ENCODE measurements at regions of chr3 and their contacts with region 1.

Region 1: GRCh38 chr3:158644345-158644908 is at the start of gene GFM1:
- DNase-seq: peak; percentile 96
- H3K4me3 Mint-ChIP-seq: peak within 1 kb of the TSS; percentile 93
- H3K27ac Mint-ChIP-seq: peak within 1 kb of the TSS; percentile 92
- H3K4me1 Mint-ChIP-seq: peaks cover 24% of the 10 kb centered on the region
- H3K27me3 Mint-ChIP-seq: no peaks in the 10 kb centered on the region
- total RNA-seq, gene GFM1: 73.4 and 75.6 TPM in 2 replicates

Region 2: DNA sequence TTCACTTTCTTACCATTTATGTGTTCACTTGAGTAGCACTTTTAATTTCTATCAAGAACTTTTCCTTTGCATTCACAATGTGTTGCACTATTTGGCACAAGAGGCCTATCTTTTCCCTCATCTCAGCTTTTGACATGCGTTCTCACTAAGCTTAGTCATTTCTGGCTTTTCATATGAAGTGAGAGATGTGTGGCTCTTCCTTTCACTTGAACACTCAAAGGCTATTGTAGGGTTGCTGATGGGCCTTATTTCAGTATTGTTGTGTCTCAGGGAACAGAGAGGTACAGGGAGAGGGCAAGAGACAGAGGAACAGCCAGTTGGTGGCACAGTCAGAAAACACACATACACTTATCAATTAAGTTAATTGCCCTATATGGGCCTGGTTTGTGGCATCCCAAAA is 200.8 kb before region 1 on chr3:
- intact Hi-C with region 1: loop called (anchors 5 kb)
- DNase-seq: peak; percentile 56
- H3K4me3 Mint-ChIP-seq: no peak overlapping the region
- H3K27ac Mint-ChIP-seq: peak overlapping the region; percentile 71
- H3K4me1 Mint-ChIP-seq: peaks cover 10% of the 10 kb centered on the region
- H3K27me3 Mint-ChIP-seq: no peaks in the 10 kb centered on the region

Region 3: GRCh38 chr3:158539414-158540014 is 104.9 kb before region 1 on chr3:
- intact Hi-C with region 1: loop called (anchors 5 kb)
- DNase-seq: peak; percentile 79
- H3K4me3 Mint-ChIP-seq: no peak overlapping the region
- H3K27ac Mint-ChIP-seq: no peak overlapping the region
- H3K4me1 Mint-ChIP-seq: no peaks in the 10 kb centered on the region
- H3K27me3 Mint-ChIP-seq: no peaks in the 10 kb centered on the region

Region 4: DNA sequence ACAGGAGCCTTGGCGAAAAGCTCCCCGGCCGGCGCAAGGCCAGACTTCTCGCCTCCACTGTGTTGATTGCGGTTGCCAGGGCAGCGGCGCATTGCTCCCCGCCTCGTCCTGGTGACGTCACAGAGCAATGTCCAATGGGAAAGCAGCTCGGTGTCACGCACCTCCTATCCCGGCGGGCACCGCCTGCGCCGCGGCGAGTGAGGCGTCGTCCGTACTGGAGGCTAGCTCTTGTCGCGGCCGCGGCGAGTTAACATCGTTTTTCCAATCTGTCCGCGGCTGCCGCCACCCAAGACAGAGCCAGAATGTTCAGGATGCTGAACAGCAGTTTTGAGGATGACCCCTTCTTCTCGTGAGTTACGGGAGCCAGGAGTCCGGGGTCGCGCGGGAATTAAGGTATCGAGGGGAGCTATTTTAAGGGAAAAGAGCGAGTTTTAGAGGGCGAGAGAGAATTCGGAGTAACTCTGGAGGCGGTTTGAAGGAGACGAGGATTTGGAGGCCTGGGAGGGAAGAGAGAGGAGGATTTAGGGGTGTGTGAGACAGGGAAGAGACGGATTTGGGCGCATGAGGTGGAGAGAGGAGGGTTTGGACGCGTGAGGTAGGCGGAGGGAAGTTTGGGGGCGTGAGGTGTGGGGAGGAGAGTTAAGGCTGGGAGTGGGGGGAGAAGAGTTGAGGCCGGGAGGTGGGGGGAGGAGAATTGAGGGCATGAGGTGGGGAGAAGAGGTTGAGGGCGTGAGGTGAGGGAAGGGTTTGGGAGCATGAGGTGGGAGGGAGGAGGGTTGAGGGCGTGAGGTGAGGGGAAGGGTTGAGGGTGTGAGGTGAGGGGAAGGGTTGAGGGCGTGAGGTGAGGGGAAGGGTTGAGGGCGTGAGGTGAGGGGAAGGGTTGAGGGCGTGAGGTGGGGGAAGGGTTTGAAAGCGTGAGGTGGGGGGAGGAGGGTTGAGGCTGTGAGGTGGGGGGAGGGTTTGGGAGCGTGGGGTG is 73.1 kb before region 1 on chr3 and contains the start of gene MLF1:
- intact Hi-C with region 1: loop called (anchors 5 kb)
- DNase-seq: peak; percentile 95
- H3K4me3 Mint-ChIP-seq: peak within 1 kb of the TSS; percentile 94
- H3K27ac Mint-ChIP-seq: peak within 1 kb of the TSS; percentile 87
- H3K4me1 Mint-ChIP-seq: peaks cover 8% of the 10 kb centered on the region
- H3K27me3 Mint-ChIP-seq: peaks cover 29% of the 10 kb centered on the region
- total RNA-seq, gene MLF1: 0.50 and 0.77 TPM in 2 replicates

Region 5: DNA sequence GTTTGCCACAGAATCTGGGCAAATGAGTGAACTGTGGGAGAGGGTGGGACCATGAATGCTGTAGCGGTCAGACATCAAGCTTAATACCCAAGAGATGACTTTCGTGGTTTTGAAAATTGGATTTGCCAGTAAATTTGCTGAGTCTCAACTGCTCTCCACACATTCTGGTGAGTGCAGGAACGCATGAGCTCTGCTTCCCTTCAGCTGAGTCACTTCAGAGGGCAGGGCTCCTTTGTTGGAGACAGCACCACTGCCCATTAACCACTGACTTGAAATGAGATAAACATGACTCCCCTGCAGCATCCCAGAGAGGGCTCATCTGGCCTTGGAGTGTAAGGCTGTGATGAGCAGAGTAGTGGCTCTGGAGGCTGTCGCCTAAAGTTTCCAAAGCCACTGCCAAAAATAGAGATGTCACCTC is 65.2 kb after region 1 on chr3:
- intact Hi-C with region 1: no loop called
- DNase-seq: no peak
- H3K4me3 Mint-ChIP-seq: no peak overlapping the region
- H3K27ac Mint-ChIP-seq: no peak overlapping the region
- H3K4me1 Mint-ChIP-seq: peaks cover 13% of the 10 kb centered on the region
- H3K27me3 Mint-ChIP-seq: no peaks in the 10 kb centered on the region

Region 6: DNA sequence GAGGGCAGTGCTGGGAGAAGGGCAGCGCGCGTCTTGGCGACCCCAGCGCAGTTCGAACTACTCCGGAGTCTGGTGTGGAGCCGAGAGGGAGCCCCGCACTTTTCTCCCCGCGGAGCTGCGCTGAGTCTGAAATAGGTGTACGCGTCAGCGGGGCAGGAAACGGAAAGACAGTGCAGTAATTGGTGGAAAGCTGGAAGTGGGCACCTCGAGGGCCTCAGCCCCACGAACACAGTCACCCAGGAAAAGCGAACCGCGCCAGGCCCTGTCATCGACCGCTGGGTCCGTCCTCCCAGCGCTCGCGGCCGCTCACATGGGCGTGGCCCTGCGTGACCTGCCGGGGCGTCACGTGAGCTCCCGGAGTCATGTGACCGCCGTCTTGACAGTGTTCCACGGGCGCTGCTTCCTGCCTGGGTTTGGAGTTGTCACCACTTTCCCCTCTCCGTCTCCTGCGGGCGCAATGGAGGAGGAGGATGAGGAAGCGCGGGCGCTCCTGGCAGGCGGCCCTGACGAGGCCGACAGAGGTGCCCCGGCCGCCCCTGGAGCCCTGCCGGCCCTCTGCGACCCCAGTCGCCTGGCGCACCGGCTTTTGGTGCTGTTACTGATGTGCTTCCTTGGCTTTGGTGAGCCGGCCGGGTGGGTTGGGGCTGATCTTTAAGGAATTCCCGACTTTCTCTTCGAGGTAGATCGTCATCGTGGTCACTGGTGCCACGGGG is 157.4 kb after region 1 on chr3 and contains the start of gene MFSD1:
- intact Hi-C with region 1: loop called (anchors 5 kb)
- DNase-seq: peak; percentile 97
- H3K4me3 Mint-ChIP-seq: peak within 1 kb of the TSS; percentile 88
- H3K27ac Mint-ChIP-seq: peak within 1 kb of the TSS; percentile 86
- H3K4me1 Mint-ChIP-seq: peaks cover 15% of the 10 kb centered on the region
- H3K27me3 Mint-ChIP-seq: peaks cover 15% of the 10 kb centered on the region
- total RNA-seq, gene MFSD1: 20.4 and 23.2 TPM in 2 replicates